ENCODE measurements at regions of chr6 and their contacts with region 1.

Region 1: DNA sequence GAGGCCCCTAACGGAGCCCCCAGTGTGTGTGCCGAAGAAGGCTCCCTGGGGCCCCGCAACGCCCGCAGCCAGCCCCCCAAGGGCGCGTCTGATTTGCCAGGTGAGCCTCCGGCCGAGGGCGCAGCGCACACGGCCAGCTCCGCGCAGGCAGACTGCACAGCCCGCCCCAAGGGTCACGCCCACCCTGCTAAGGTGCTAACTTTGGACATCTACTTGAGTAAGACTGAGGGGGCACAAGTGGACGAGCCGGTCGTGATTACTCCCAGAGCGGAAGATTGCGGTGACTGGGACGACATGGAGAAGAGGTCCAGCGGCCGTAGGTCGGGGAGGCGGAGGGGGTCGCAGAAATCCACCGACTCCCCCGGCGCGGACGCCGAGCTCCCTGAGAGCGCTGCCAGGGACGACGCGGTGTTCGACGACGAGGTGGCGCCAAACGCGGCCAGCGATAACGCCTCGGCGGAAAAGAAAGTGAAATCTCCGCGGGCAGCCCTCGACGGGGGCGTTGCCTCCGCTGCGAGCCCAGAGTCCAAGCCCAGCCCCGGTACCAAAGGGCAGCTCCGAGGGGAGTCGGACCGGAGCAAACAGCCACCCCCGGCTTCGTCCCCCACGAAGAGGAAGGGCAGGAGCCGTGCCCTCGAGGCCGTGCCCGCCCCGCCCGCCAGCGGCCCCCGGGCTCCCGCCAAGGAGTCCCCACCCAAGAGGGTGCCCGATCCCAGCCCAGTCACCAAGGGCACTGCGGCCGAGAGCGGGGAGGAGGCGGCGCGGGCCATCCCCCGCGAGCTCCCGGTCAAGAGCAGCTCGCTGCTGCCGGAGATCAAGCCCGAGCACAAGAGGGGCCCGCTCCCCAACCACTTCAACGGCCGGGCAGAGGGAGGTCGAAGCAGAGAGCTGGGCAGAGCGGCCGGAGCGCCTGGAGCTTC is 117.0 kb downstream of the RTN4IP1 start:
- DNase-seq: peak; percentile 89
- ATAC-seq: peak; percentile 69
- H3K4me3 ChIP-seq: peak overlapping the region; percentile 84 to 96 (median 91)
- H3K4me3 Mint-ChIP-seq: peak overlapping the region; percentile 98
- H3K27ac ChIP-seq: peak overlapping the region; percentile 91 to 95
- H3K27ac Mint-ChIP-seq: peak overlapping the region; percentile 97
- H3K4me1 ChIP-seq: peaks cover 46 to 50% of the 10 kb centered on the region in 2 donors
- H3K4me1 Mint-ChIP-seq: peaks cover 57% of the 10 kb centered on the region
- H3K27me3 ChIP-seq: no peaks in the 10 kb centered on the region
- H3K27me3 Mint-ChIP-seq: no peaks in the 10 kb centered on the region
- CTCF ChIP-seq: peak; percentile 66

Region 2: GRCh38 chr6:106397431-106397830 is 114.9 kb before region 1 on chr6:
- CTCF ChIA-PET with region 1: no interaction called
- POLR2A ChIA-PET with region 1: no interaction called
- intact Hi-C with region 1: no loop called
- DNase-seq: no peak
- ATAC-seq: no peak
- H3K4me3 ChIP-seq: no peak overlapping the region
- H3K4me3 Mint-ChIP-seq: no peak overlapping the region
- H3K27ac ChIP-seq: no peak overlapping the region
- H3K27ac Mint-ChIP-seq: no peak overlapping the region
- H3K4me1 ChIP-seq: no peaks in the 10 kb centered on the region
- H3K4me1 Mint-ChIP-seq: no peaks in the 10 kb centered on the region
- H3K27me3 ChIP-seq: peaks cover 0 to 9% (median 6%) of the 10 kb centered on the region in 4 experiments
- H3K27me3 Mint-ChIP-seq: peaks cover 36% of the 10 kb centered on the region
- CTCF ChIP-seq: no peak

Region 3: DNA sequence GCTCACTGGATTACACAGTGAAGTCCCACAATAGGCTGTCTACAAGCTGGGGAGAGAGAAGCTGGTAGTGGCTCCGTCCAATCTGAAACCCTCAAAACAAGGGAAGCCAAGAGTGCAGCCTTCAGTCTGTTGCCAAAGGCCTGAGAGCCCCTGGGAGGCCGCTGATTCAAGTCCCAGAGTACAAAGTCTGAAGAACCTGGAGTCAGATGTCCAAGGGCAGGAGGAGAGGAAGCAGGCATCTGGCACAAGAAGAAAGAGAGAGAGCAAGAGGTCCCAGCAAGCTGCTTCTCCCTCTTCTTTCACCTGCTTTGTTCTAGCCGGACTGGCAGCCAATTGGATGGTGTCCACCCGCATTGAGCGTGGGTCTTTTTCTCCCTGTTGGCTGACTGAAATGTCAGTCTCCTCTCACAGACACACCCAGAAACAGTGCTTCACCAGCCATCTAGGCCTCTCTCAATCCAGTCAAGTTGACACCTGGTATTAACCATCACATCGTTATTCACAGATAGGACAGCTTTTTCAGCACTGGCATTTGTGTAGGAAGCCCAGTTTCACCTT is 100.6 kb before region 1 on chr6:
- CTCF ChIA-PET with region 1: no interaction called
- POLR2A ChIA-PET with region 1: no interaction called
- intact Hi-C with region 1: no loop called
- DNase-seq: no peak
- ATAC-seq: no peak
- H3K4me3 ChIP-seq: no peak overlapping the region
- H3K4me3 Mint-ChIP-seq: no peak overlapping the region
- H3K27ac ChIP-seq: no peak overlapping the region
- H3K27ac Mint-ChIP-seq: no peak overlapping the region
- H3K4me1 ChIP-seq: no peaks in the 10 kb centered on the region
- H3K4me1 Mint-ChIP-seq: no peaks in the 10 kb centered on the region
- H3K27me3 ChIP-seq: no peaks in the 10 kb centered on the region
- H3K27me3 Mint-ChIP-seq: peaks cover 33% of the 10 kb centered on the region
- CTCF ChIP-seq: no peak

Region 4: DNA sequence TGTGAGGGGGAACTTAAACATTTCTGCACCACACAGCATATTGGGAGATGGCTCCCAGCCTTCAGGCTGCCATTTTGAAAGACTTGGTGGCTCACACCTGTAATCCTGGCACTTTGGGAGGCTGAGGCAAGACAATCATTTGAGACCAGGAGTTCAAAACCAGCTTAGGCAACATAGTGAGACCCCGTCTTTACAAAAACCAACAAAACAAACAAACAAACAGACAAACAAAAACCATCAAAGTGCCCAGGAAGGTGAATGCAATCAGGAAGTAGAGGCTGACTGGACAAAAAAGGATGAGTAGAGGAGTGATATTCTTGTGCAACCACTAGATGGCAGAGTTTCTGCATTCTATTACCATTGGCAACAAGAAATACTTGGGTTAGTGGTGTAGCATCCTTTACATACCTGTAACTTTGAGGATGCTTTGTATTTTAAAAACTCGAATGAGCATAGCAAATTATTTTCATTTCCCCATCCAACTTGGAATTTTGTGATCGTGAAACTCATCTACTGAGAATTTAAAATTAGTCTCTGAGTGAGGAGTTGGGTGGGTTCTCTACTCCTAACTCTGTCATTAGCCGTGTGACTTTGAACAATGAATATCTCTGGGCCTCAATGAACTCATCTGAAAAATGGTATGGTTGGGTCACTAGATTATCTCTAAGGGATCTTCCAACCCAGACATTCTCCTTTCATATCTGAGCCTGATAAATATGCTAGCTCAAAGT is 67.4 kb before region 1 on chr6:
- CTCF ChIA-PET with region 1: interaction called, 99 read pairs
- POLR2A ChIA-PET with region 1: no interaction called
- intact Hi-C with region 1: loop called (anchors 2 kb)
- DNase-seq: peak; percentile 79
- ATAC-seq: peak; percentile 59
- H3K4me3 ChIP-seq: no peak overlapping the region
- H3K4me3 Mint-ChIP-seq: no peak overlapping the region
- H3K27ac ChIP-seq: no peak overlapping the region
- H3K27ac Mint-ChIP-seq: peak overlapping the region; percentile 60
- H3K4me1 ChIP-seq: peaks cover 19 to 22% of the 10 kb centered on the region in 2 donors
- H3K4me1 Mint-ChIP-seq: peaks cover 20% of the 10 kb centered on the region
- H3K27me3 ChIP-seq: peaks cover 0 to 3% (median 0%) of the 10 kb centered on the region in 4 experiments
- H3K27me3 Mint-ChIP-seq: peaks cover 20% of the 10 kb centered on the region
- CTCF ChIP-seq: peak; percentile 92

Region 5: GRCh38 chr6:106534564-106534982 is 22.3 kb after region 1 on chr6:
- CTCF ChIA-PET with region 1: interaction called, 35 read pairs
- POLR2A ChIA-PET with region 1: interaction called, 5 read pairs
- intact Hi-C with region 1: no loop called
- DNase-seq: no peak
- ATAC-seq: peak; percentile 14
- H3K4me3 ChIP-seq: no peak overlapping the region
- H3K4me3 Mint-ChIP-seq: no peak overlapping the region
- H3K27ac ChIP-seq: peak overlapping the region in 1 of 2 donors; percentile 68
- H3K27ac Mint-ChIP-seq: peak overlapping the region; percentile 86
- H3K4me1 ChIP-seq: peaks cover 41 to 45% of the 10 kb centered on the region in 2 donors
- H3K4me1 Mint-ChIP-seq: peaks cover 76% of the 10 kb centered on the region
- H3K27me3 ChIP-seq: no peaks in the 10 kb centered on the region
- H3K27me3 Mint-ChIP-seq: no peaks in the 10 kb centered on the region
- CTCF ChIP-seq: no peak

Region 6: GRCh38 chr6:106546691-106547414 is 34.5 kb after region 1 on chr6:
- CTCF ChIA-PET with region 1: interaction called, 156 read pairs
- POLR2A ChIA-PET with region 1: interaction called, 21 read pairs
- intact Hi-C with region 1: loop called (anchors 1 kb)
- DNase-seq: peak; percentile 86
- ATAC-seq: peak; percentile 80
- H3K4me3 ChIP-seq: peak overlapping the region in 1 of 5 experiments; percentile 42
- H3K4me3 Mint-ChIP-seq: peak overlapping the region; percentile 80
- H3K27ac ChIP-seq: peak overlapping the region; percentile 88 to 93
- H3K27ac Mint-ChIP-seq: peak overlapping the region; percentile 99
- H3K4me1 ChIP-seq: peaks cover 31 to 35% of the 10 kb centered on the region in 2 donors
- H3K4me1 Mint-ChIP-seq: peaks cover 48% of the 10 kb centered on the region
- H3K27me3 ChIP-seq: no peaks in the 10 kb centered on the region
- H3K27me3 Mint-ChIP-seq: no peaks in the 10 kb centered on the region
- CTCF ChIP-seq: no peak

Region 7: DNA sequence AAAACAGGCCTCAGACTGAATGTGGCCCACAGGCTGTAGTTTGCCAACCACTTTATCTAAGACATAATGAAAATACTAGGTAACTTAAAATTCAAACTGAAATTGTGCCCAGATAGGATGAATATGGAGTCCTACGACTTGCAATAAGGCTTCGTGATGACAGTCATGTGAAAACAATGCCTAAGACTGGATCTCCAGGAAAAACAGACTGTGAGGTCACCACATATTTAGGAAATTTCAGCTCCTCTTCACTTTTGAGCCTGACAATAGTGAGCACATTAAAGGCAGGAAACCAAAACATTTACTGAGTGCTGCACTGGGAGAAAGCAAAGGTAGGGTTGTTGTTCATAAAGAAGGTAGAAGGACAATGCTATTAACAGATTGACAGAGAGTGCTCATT is 67.0 kb after region 1 on chr6:
- CTCF ChIA-PET with region 1: no interaction called
- POLR2A ChIA-PET with region 1: interaction called, 11 read pairs
- intact Hi-C with region 1: no loop called
- DNase-seq: no peak
- ATAC-seq: no peak
- H3K4me3 ChIP-seq: no peak overlapping the region
- H3K4me3 Mint-ChIP-seq: no peak overlapping the region
- H3K27ac ChIP-seq: no peak overlapping the region
- H3K27ac Mint-ChIP-seq: no peak overlapping the region
- H3K4me1 ChIP-seq: no peaks in the 10 kb centered on the region
- H3K4me1 Mint-ChIP-seq: no peaks in the 10 kb centered on the region
- H3K27me3 ChIP-seq: no peaks in the 10 kb centered on the region
- H3K27me3 Mint-ChIP-seq: no peaks in the 10 kb centered on the region
- CTCF ChIP-seq: no peak

Region 8: DNA sequence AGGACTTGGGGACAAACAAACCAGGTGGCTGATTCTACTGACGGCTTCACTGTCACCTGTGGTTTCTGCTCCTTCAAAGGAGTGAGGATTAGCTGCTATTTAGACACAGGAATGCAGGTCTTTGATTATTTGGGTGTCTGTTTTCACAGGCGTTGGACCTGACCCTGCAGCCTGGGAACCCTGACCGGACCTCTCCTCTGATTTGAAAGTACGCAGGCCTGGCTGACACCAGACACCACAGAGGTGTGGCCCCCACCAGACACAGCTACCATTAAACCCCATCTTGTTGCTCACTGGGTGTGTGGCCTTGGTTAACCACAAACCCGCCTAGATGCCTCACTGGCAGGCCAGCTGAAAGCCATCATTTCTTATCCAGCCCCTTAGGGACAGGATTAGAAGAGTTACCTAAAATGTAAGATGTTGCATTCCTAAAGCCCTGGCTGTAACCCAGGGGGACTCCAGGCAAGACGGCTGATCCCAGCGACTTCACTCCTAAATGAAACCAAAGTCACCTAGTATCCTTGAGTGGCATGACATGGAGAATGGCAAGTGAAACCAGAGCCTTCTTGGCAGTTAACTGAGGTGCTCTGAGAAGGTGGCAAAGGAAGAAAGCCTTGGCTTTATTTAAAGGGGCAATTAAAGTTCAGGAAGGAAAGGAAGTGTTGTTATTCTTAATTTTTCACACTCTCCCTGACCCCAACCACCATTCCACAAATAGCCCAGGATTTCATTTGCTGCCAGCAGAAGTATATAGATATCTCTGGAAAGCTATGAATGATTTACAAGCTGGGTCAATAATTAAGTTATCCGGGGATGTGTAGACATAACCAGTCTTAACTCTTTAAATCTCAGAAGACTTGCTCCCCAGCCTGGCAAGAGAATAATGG is 286.9 kb after region 1 on chr6:
- CTCF ChIA-PET with region 1: no interaction called
- POLR2A ChIA-PET with region 1: no interaction called
- intact Hi-C with region 1: no loop called
- DNase-seq: peak; percentile 11
- ATAC-seq: peak; percentile 69
- H3K4me3 ChIP-seq: no peak overlapping the region
- H3K4me3 Mint-ChIP-seq: no peak overlapping the region
- H3K27ac ChIP-seq: no peak overlapping the region
- H3K27ac Mint-ChIP-seq: peak overlapping the region; percentile 32
- H3K4me1 ChIP-seq: peaks cover 10 to 12% of the 10 kb centered on the region in 2 donors
- H3K4me1 Mint-ChIP-seq: peaks cover 17% of the 10 kb centered on the region
- H3K27me3 ChIP-seq: no peaks in the 10 kb centered on the region
- H3K27me3 Mint-ChIP-seq: peaks cover 5% of the 10 kb centered on the region
- CTCF ChIP-seq: no peak

Region 9: DNA sequence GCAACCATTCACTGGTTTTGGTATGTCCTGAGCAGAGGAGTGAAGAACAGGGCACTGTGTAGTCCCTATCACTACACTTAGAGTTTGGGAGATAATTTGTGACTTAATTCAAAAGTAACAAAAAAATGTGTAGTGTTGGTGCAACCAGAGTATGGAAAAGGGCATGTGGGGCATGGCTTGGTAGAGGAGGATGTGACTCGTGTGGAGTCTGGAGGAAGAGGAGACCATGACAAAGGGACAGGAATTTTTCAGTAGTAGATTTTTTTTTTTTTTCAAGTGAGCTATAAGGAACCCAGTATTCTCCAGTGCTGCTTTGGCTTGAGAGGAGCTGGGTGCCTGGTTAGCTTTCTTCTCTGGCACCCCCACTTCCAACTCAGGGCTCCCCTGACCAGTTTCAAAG is 520.8 kb after region 1 on chr6:
- CTCF ChIA-PET with region 1: no interaction called
- POLR2A ChIA-PET with region 1: no interaction called
- intact Hi-C with region 1: loop called (anchors 2 kb)
- DNase-seq: no peak
- ATAC-seq: no peak
- H3K4me3 ChIP-seq: no peak overlapping the region
- H3K4me3 Mint-ChIP-seq: no peak overlapping the region
- H3K27ac ChIP-seq: no peak overlapping the region
- H3K27ac Mint-ChIP-seq: no peak overlapping the region
- H3K4me1 ChIP-seq: peaks cover 4 to 10% of the 10 kb centered on the region in 2 donors
- H3K4me1 Mint-ChIP-seq: peaks cover 20% of the 10 kb centered on the region
- H3K27me3 ChIP-seq: no peaks in the 10 kb centered on the region
- H3K27me3 Mint-ChIP-seq: no peaks in the 10 kb centered on the region
- CTCF ChIP-seq: no peak

Region 10: GRCh38 chr6:107083047-107083768 is 570.9 kb after region 1 on chr6:
- CTCF ChIA-PET with region 1: no interaction called
- POLR2A ChIA-PET with region 1: no interaction called
- intact Hi-C with region 1: no loop called
- DNase-seq: no peak
- ATAC-seq: no peak
- H3K4me3 ChIP-seq: no peak overlapping the region
- H3K4me3 Mint-ChIP-seq: no peak overlapping the region
- H3K27ac ChIP-seq: no peak overlapping the region
- H3K27ac Mint-ChIP-seq: no peak overlapping the region
- H3K4me1 ChIP-seq: no peaks in the 10 kb centered on the region
- H3K4me1 Mint-ChIP-seq: no peaks in the 10 kb centered on the region
- H3K27me3 ChIP-seq: no peaks in the 10 kb centered on the region
- H3K27me3 Mint-ChIP-seq: no peaks in the 10 kb centered on the region
- CTCF ChIP-seq: no peak